GM13977 (cell line): ENCODE measurements at regions of chr4 and their contacts with region 1.

Region 1: DNA sequence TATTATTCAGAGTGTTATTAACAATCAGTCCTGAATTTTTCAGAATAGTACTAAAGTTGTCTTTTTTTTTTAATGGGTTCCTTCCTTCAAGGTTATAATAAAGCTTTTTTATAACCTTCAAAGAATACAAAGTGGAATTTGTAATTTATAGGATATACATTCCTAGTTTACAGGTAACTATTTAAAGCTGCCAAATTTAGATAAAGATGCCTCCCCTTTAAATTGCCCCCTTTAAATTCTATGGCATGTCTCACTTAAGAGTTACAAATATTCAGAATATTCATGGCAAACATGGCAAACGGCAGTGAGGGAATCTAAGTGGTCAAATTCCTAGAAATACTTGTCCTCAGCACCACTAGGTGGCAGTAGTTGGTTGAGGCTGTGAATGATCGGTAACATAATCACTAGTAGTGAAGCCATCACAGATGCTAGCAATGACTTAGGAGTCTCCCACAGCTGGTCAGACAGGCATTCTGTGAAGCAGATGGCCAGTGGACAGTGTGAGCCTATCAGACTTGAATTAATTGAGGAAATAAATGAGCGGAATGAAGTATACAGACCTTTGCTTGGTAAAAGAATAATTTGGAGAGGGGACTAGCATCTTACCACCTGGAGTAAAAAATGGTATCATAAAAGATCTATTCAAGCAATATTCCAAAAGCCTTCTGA is 86.4 kb downstream of the CBR4 start:
- DNase-seq: peak; percentile 57
- CTCF ChIP-seq: peak; percentile 66

Region 2: DNA sequence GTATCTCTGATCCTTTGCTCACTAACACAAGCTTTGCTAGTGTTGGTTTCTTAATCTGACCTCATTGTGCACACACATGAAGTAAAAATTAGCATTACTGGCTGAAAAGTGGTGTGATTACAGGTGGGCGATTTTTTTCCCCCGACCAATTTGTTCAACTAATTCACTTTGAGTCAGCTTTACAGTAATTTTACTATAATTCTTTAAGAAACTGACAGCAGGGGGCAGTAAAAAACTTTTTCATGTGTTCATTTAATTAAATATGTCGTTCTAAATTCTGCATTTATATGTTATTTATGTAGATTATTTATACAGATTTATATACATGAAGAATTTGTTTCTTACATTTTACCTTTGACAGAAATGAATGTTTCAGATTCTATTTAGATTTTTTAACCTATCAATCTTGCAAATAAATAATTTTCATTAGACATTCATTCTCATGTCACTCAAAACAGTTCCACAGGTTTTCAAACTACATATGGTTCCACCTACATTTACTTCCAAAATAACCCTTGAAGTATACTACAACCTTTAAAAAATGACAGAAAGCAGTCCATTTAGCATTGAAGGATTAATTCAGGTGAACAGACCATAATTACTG is 409.3 kb before region 1 on chr4:
- in situ Hi-C with region 1: loop called (anchors 25 kb)
- DNase-seq: peak; percentile 19
- CTCF ChIP-seq: peak; percentile 27

Region 3: DNA sequence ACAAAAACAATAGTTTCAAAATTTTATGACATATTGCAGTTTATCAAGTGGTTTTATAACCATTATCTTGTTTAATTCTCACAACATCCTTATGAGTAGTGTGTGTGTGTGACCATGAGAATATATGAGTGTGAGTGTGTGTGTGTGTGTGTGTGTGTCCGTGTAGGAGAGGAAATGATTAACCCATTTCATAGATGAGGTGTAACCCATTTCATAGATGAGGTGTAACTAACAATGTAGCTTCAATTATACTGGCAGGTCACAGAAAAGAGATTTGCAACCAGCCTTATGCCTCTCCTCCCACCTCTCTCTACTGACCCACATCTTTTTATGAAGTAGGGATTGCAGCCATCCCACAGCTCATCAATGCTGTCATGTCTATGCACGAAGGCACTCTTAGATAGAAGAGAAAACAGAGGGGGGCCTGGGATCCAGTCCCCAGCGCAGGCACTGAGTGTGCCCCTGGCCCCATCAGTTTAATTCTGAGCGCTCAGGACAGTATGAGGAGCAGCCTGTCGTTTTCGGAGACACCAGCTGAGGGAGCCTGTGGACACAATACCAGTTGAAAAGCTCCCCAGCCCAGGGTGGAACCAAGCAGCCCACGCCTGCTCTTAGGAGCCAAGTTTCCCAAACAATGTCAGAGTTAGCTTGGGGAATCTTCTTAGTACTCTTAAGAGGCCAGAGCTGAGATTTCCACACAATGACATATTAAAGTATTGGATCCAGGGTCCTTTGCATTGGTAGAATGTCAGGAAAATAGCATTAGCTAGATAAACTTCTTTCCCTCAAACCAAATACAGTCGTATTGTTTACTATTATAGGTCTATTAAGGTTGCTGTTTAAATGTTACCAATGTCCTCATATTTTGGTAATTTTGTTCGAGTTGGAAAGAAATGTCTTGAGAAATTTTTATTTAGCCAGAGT is 338.2 kb before region 1 on chr4:
- in situ Hi-C with region 1: loop called (anchors 25 kb)
- DNase-seq: peak; percentile 17
- CTCF ChIP-seq: peak; percentile 57

Region 4: GRCh38 chr4:168710353-168710946 is 213.2 kb before region 1 on chr4:
- in situ Hi-C with region 1: loop called (anchors 25 kb)
- DNase-seq: peak; percentile 40
- CTCF ChIP-seq: peak; percentile 33

Region 5: GRCh38 chr4:169485791-169486742 is 562.4 kb after region 1 on chr4:
- in situ Hi-C with region 1: loop called (anchors 5 kb)
- DNase-seq: peak; percentile 47
- CTCF ChIP-seq: peak; percentile 72